CD4-positive, alpha-beta memory T cell (primary cell): ENCODE measurements at regions of chr17 and their contacts with region 1.

Region 1: DNA sequence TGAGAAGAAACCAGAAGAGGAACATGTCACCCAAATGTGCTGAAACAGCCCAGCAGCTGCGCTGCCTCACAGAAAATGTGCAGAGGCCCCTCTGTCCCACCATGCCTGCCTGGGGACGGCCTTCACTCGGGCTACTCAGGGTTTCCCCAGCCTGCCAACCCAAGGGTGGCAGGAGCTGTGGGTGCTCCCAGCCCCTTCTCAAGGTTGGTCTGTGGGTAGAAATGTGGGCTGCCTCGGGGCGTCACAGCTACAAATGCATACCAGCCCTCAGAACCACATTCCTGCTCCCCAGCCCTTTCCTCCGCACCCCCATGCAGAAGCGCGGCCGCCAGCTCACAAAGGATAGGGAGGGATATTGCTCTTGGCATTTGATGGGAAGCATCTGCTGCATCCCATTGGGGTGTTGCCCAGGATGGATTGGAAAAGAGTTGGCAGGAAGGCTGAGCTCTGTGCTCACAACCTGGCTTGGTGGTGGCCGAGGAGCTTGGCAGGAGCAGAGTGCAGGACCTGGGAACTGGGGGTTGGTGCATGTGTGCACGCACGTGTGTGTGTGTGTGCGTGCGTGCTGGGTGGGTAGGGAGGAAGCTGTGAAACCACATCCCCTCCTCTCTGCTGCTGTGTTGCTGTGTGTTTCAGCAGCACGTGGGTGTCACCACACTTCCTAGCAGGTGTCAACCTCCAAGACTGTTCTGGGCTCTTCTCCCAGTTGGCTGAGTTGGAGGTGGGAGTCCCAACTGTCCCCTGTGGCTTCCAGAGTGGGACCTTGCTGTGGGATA is 304.4 kb downstream of the SEC14L1 start:
- DNase-seq: peak; percentile 92 to 95 (median 94)
- H3K4me3 ChIP-seq: peak overlapping the region; percentile 54 to 64
- H3K4me3 Mint-ChIP-seq: peak overlapping the region; percentile 73 to 89 (median 86)
- H3K27ac ChIP-seq: peak overlapping the region; percentile 90
- H3K27ac Mint-ChIP-seq: peak overlapping the region; percentile 90 to 99 (median 99)
- H3K4me1 ChIP-seq: peaks cover 100% of the 10 kb centered on the region
- H3K4me1 Mint-ChIP-seq: peaks cover 65 to 99% (median 89%) of the 10 kb centered on the region in 4 donors
- H3K27me3 ChIP-seq: no peaks in the 10 kb centered on the region
- H3K27me3 Mint-ChIP-seq: no peaks in the 10 kb centered on the region

Region 2: GRCh38 chr17:77322514-77323412 is 122.4 kb before region 1 on chr17:
- CTCF ChIA-PET with region 1: interaction called, 4 read pairs
- POLR2A ChIA-PET with region 1: interaction called, 252 read pairs
- intact Hi-C with region 1: no loop called
- DNase-seq: no peak
- H3K4me3 ChIP-seq: no peak overlapping the region
- H3K4me3 Mint-ChIP-seq: peak overlapping the region in 1 of 8 donors; percentile 13
- H3K27ac ChIP-seq: no peak overlapping the region
- H3K27ac Mint-ChIP-seq: no peak overlapping the region
- H3K4me1 ChIP-seq: peaks cover 69% of the 10 kb centered on the region
- H3K4me1 Mint-ChIP-seq: peaks cover 30 to 68% (median 51%) of the 10 kb centered on the region in 4 donors
- H3K27me3 ChIP-seq: no peaks in the 10 kb centered on the region
- H3K27me3 Mint-ChIP-seq: no peaks in the 10 kb centered on the region

Region 3: GRCh38 chr17:77382966-77383612 is 62.1 kb before region 1 on chr17:
- CTCF ChIA-PET with region 1: interaction called, 6 read pairs
- POLR2A ChIA-PET with region 1: interaction called, 6,031 read pairs
- intact Hi-C with region 1: loop called (anchors 2 kb)
- DNase-seq: no peak
- H3K4me3 ChIP-seq: peak overlapping the region in 1 of 2 donors; percentile 41
- H3K4me3 Mint-ChIP-seq: peak overlapping the region; percentile 74 to 94 (median 82)
- H3K27ac ChIP-seq: peak overlapping the region; percentile 50
- H3K27ac Mint-ChIP-seq: peak overlapping the region; percentile 82 to 95 (median 90)
- H3K4me1 ChIP-seq: peaks cover 98% of the 10 kb centered on the region
- H3K4me1 Mint-ChIP-seq: peaks cover 56 to 97% (median 84%) of the 10 kb centered on the region in 4 donors
- H3K27me3 ChIP-seq: no peaks in the 10 kb centered on the region
- H3K27me3 Mint-ChIP-seq: no peaks in the 10 kb centered on the region

Region 4: DNA sequence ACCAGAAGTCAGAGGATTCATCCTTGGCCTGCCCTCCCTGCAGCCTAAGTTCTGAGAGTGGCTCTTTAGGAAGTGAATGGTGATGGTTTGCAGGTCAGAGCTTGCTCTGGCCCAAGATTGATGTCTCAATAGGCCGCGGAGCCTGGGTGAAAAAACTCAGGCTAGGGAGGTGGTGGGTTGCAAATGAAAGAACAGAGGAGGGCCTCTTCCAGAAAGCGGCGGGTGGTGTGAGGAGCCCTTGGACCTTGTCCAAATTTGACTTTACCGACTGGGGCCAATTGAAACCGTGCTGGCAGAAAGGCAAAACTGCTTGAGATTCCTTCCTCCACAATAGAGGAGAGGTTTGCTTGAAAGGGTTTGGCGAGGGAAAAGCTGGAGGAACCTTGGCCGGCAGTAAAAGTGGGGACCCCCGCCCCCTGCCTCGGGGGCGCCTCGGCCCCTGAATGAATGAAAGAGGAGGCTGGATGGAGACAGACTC is 26.9 kb after region 1 on chr17:
- CTCF ChIA-PET with region 1: interaction called, 10 read pairs
- POLR2A ChIA-PET with region 1: interaction called, 6,031 read pairs
- intact Hi-C with region 1: no loop called
- DNase-seq: peak in 1 of 5 donors; percentile 34
- H3K4me3 ChIP-seq: peak overlapping the region; percentile 18 to 48
- H3K4me3 Mint-ChIP-seq: peak overlapping the region; percentile 43 to 91 (median 74)
- H3K27ac ChIP-seq: peak overlapping the region; percentile 51
- H3K27ac Mint-ChIP-seq: peak overlapping the region; percentile 82 to 98 (median 93)
- H3K4me1 ChIP-seq: peaks cover 100% of the 10 kb centered on the region
- H3K4me1 Mint-ChIP-seq: peaks cover 67 to 99% (median 90%) of the 10 kb centered on the region in 4 donors
- H3K27me3 ChIP-seq: no peaks in the 10 kb centered on the region
- H3K27me3 Mint-ChIP-seq: no peaks in the 10 kb centered on the region

Region 5: DNA sequence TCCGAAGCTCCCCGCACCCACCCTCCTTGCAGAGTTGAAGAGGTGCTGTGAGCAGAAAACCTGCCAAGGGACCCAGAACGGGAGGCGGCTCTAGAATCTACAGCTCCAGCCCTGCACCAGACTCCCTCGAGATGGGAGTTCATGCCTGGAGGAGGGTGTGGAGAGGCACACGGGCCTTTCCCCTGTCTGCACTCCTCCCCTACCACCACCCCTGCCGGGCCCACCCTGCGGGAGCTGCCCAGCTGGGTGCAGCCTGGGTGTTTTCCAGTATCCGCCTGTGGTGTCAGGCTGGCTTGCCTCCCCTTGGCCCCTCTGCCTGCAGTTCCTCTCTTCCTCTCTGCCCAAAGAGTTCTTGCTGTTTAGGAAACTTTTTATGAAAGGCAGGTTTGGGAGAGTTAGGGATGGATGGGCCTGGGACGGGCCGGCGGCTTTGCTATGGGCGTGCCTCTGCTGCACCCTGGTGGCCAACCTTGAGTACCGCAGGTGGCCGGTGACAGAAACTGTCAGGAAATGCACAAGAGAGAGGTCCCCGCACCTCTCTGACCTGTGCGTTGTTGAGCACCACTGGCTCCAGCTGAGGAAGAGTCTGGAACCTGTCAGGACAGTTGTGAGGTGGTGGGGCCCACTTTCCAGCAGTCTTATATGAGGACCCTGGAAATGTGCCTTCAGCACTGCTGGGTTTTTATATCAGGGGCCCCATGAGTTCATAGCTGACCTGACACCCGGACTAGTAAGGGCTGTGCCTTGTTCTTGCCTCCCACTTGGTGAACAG is 49.7 kb after region 1 on chr17:
- CTCF ChIA-PET with region 1: interaction called, 20 read pairs
- POLR2A ChIA-PET with region 1: interaction called, 25 read pairs
- intact Hi-C with region 1: no loop called
- DNase-seq: peak; percentile 64 to 78 (median 70)
- H3K4me3 ChIP-seq: no peak overlapping the region
- H3K4me3 Mint-ChIP-seq: peak overlapping the region in 2 of 8 donors; percentile 5 to 35
- H3K27ac ChIP-seq: peak overlapping the region; percentile 10
- H3K27ac Mint-ChIP-seq: peak overlapping the region; percentile 57 to 94 (median 87)
- H3K4me1 ChIP-seq: peaks cover 41% of the 10 kb centered on the region
- H3K4me1 Mint-ChIP-seq: peaks cover 8 to 45% (median 17%) of the 10 kb centered on the region in 4 donors
- H3K27me3 ChIP-seq: no peaks in the 10 kb centered on the region
- H3K27me3 Mint-ChIP-seq: no peaks in the 10 kb centered on the region